CD14-positive monocyte (primary cell): ENCODE measurements at regions of chr2 and their contacts with region 1.

Region 1: GRCh38 chr2:222903234-222904220 is 42.7 kb downstream of the ACSL3 start:
- DNase-seq: peak; percentile 34 to 58 (median 51)
- H3K4me3 ChIP-seq: no peak overlapping the region
- H3K4me3 Mint-ChIP-seq: no peak overlapping the region
- H3K27ac ChIP-seq: no peak overlapping the region
- H3K27ac Mint-ChIP-seq: peak overlapping the region in 1 of 7 donors; percentile 65
- H3K4me1 ChIP-seq: peaks cover 2 to 4% of the 10 kb centered on the region in 2 donors
- H3K4me1 Mint-ChIP-seq: peaks cover 9% of the 10 kb centered on the region
- H3K27me3 ChIP-seq: no peaks in the 10 kb centered on the region
- H3K27me3 Mint-ChIP-seq: no peaks in the 10 kb centered on the region
- CTCF ChIP-seq: peak; percentile 65

Region 2: DNA sequence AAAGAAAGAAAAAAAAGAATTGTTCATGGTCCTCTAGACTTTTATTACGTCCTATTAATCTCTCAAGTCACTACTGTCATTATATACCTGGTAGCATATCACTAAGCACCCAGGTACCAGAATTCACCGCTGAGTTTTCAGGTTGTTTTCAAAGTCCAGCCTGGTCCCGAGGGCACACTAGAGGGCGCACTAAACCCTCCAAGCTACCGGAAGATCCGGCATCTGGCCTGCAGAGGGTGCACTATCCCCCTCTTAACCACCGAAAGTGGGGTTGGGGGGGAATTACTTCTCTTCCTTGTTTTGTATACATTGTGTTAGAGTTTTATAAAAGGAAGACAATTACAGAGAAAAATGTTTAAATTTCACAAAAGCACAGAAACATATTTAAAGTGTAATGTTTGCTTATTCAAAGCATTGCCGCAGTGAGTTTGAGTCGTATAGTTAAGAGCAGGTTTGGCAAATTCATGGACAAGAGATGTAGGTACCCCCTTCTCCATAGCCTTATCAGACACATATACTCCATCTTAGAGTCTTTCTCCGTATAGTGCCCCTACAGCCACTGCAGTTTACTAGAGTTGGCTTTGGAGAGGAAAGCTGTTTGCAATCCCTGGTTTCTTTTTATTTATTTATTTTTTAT is 212.8 kb before region 1 on chr2:
- intact Hi-C with region 1: loop called (anchors 5 kb)
- DNase-seq: peak; percentile 79 to 86 (median 86)
- H3K4me3 ChIP-seq: no peak overlapping the region
- H3K4me3 Mint-ChIP-seq: no peak overlapping the region
- H3K27ac ChIP-seq: no peak overlapping the region
- H3K27ac Mint-ChIP-seq: no peak overlapping the region
- H3K4me1 ChIP-seq: peaks cover 0 to 6% of the 10 kb centered on the region in 2 donors
- H3K4me1 Mint-ChIP-seq: peaks cover 17% of the 10 kb centered on the region
- H3K27me3 ChIP-seq: no peaks in the 10 kb centered on the region
- H3K27me3 Mint-ChIP-seq: no peaks in the 10 kb centered on the region
- CTCF ChIP-seq: peak; percentile 100

Region 3: DNA sequence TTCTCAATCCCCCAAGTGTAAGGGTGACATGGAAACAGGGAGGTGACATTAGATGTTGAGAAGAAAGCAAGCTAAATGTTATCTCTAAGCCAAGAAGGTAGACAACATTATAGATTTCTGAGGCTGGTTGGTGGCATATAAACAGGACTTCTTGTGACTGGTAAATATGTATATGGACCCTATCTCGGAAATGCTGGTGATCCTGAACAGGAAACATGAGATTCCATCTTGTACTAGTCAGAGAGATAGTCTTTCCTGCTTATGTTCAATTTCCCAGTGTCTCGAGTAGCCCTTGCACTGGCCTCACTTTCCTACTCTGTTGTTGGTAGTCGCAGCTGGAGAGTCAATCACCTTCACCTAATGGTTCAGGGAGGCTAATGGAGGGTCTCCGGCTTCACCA is 205.3 kb before region 1 on chr2:
- intact Hi-C with region 1: loop called (anchors 5 kb)
- DNase-seq: no peak
- H3K4me3 ChIP-seq: no peak overlapping the region
- H3K4me3 Mint-ChIP-seq: no peak overlapping the region
- H3K27ac ChIP-seq: no peak overlapping the region
- H3K27ac Mint-ChIP-seq: no peak overlapping the region
- H3K4me1 ChIP-seq: no peaks in the 10 kb centered on the region
- H3K4me1 Mint-ChIP-seq: peaks cover 4% of the 10 kb centered on the region
- H3K27me3 ChIP-seq: no peaks in the 10 kb centered on the region
- H3K27me3 Mint-ChIP-seq: peaks cover 0 to 7% (median 4%) of the 10 kb centered on the region in 3 donors
- CTCF ChIP-seq: no peak

Region 4: GRCh38 chr2:222707689-222708525 is 195.6 kb before region 1 on chr2:
- intact Hi-C with region 1: loop called in 1 of 2 experiments (anchors 1 kb)
- DNase-seq: peak; percentile 81 to 96 (median 87)
- H3K4me3 ChIP-seq: no peak overlapping the region
- H3K4me3 Mint-ChIP-seq: peak overlapping the region; percentile 39 to 62
- H3K27ac ChIP-seq: peak overlapping the region in 1 of 2 donors; percentile 29
- H3K27ac Mint-ChIP-seq: peak overlapping the region; percentile 23 to 92 (median 91)
- H3K4me1 ChIP-seq: peaks cover 19 to 21% of the 10 kb centered on the region in 2 donors
- H3K4me1 Mint-ChIP-seq: peaks cover 35% of the 10 kb centered on the region
- H3K27me3 ChIP-seq: no peaks in the 10 kb centered on the region
- H3K27me3 Mint-ChIP-seq: peaks cover under 1 to 1% (median under 1%) of the 10 kb centered on the region in 3 donors
- CTCF ChIP-seq: peak; percentile 93

Region 5: GRCh38 chr2:222860740-222861410 is 42.7 kb before region 1 on chr2 and contains the start of gene ACSL3:
- intact Hi-C with region 1: loop called in 1 of 2 experiments (anchors 5 kb)
- DNase-seq: peak; percentile 89 to 94 (median 91)
- H3K4me3 ChIP-seq: peak within 1 kb of the TSS; percentile 75 to 96 (median 80)
- H3K4me3 Mint-ChIP-seq: peak within 1 kb of the TSS in 1 of 2 donors; percentile 75
- H3K27ac ChIP-seq: peak within 1 kb of the TSS; percentile 53 to 85
- H3K27ac Mint-ChIP-seq: peak within 1 kb of the TSS; percentile 76 to 96 (median 83)
- H3K4me1 ChIP-seq: peaks cover 29 to 31% of the 10 kb centered on the region in 2 donors
- H3K4me1 Mint-ChIP-seq: peaks cover 13% of the 10 kb centered on the region
- H3K27me3 ChIP-seq: no peaks in the 10 kb centered on the region
- H3K27me3 Mint-ChIP-seq: peaks cover 0 to 3% (median 0%) of the 10 kb centered on the region in 3 donors
- CTCF ChIP-seq: peak; percentile 12
- polyA plus RNA-seq, gene ACSL3: 8.8 to 24.4 (median 19.9) TPM

Region 6: DNA sequence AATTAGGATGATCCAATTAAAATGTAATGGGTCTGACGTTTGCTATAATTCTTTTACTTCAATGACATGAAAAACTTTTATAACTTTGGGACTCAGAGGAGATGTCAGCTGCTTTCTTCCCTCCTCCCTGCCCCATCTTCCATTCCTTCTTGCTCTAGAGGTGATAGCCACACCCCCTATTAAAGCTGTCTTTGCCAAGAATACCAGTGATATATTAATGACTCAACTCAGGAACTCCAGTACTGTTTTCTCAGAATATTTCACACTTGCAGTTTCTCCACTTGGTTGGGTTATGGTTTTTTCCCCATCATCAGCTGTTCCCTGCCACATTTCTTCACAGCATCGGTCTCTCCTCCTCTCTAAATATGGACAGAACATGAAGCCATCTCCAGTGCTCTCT is 332.5 kb after region 1 on chr2:
- intact Hi-C with region 1: no loop called
- DNase-seq: no peak
- H3K4me3 ChIP-seq: no peak overlapping the region
- H3K4me3 Mint-ChIP-seq: no peak overlapping the region
- H3K27ac ChIP-seq: no peak overlapping the region
- H3K27ac Mint-ChIP-seq: no peak overlapping the region
- H3K4me1 ChIP-seq: no peaks in the 10 kb centered on the region
- H3K4me1 Mint-ChIP-seq: no peaks in the 10 kb centered on the region
- H3K27me3 ChIP-seq: no peaks in the 10 kb centered on the region
- H3K27me3 Mint-ChIP-seq: peaks cover 0 to 3% (median 2%) of the 10 kb centered on the region in 3 donors
- CTCF ChIP-seq: no peak

Region 7: GRCh38 chr2:223727562-223727961 is 824.0 kb after region 1 on chr2:
- intact Hi-C with region 1: no loop called
- DNase-seq: peak in 2 of 3 donors; percentile 0 to 12
- H3K4me3 ChIP-seq: no peak overlapping the region
- H3K4me3 Mint-ChIP-seq: no peak overlapping the region
- H3K27ac ChIP-seq: no peak overlapping the region
- H3K27ac Mint-ChIP-seq: no peak overlapping the region
- H3K4me1 ChIP-seq: no peaks in the 10 kb centered on the region
- H3K4me1 Mint-ChIP-seq: no peaks in the 10 kb centered on the region
- H3K27me3 ChIP-seq: no peaks in the 10 kb centered on the region
- H3K27me3 Mint-ChIP-seq: peaks cover 0 to 5% (median 3%) of the 10 kb centered on the region in 3 donors
- CTCF ChIP-seq: peak; percentile 54